ENCODE measurements at regions of chr5 and their contacts with region 1.

Region 1: GRCh38 chr5:168047043-168047668 is 244.3 kb upstream of the WWC1 start:
- DNase-seq: no peak
- ATAC-seq: peak; percentile 74 to 76
- H3K4me3 ChIP-seq: no peak overlapping the region
- H3K27ac ChIP-seq: no peak overlapping the region
- H3K4me1 ChIP-seq: no peaks in the 10 kb centered on the region
- H3K27me3 ChIP-seq: no peaks in the 10 kb centered on the region

Region 2: GRCh38 chr5:167723254-167723871 is 323.8 kb before region 1 on chr5:
- intact Hi-C with region 1: loop called in 1 of 4 experiments (anchors 10 kb)
- DNase-seq: peak; percentile 61 to 87 (median 75)
- ATAC-seq: peak; percentile 74 to 90
- H3K4me3 ChIP-seq: no peak overlapping the region
- H3K27ac ChIP-seq: no peak overlapping the region
- H3K4me1 ChIP-seq: no peaks in the 10 kb centered on the region
- H3K27me3 ChIP-seq: no peaks in the 10 kb centered on the region

Measured in right cardiac atrium (tissue), 5 donors.